ENCODE measurements at regions of chr11 and their contacts with region 1.

Region 1: DNA sequence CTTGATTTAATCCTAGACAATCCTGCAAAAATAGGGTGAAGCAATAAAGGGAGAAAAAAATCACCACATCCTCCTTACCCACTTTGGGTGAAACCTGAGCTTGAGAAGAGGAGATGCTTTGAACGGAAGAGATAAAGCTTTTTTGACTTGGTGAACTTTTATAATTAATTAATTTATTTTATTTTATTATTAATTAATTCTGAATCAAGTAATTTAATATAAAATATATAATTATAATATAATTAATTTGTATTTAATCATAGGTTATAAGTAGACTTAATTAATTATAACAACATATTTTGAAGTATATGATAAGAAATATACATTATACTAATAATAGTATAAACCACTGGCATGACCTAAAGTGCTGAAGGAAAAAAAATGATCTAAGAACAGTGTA is 2164.8 kb downstream of the LRRC4C start:
- DNase-seq: no peak
- ATAC-seq: no peak
- H3K4me3 ChIP-seq: no peak overlapping the region
- H3K27ac ChIP-seq: no peak overlapping the region
- H3K4me1 ChIP-seq: no peaks in the 10 kb centered on the region
- H3K27me3 ChIP-seq: no peaks in the 10 kb centered on the region
- CTCF ChIP-seq: no peak

Region 2: DNA sequence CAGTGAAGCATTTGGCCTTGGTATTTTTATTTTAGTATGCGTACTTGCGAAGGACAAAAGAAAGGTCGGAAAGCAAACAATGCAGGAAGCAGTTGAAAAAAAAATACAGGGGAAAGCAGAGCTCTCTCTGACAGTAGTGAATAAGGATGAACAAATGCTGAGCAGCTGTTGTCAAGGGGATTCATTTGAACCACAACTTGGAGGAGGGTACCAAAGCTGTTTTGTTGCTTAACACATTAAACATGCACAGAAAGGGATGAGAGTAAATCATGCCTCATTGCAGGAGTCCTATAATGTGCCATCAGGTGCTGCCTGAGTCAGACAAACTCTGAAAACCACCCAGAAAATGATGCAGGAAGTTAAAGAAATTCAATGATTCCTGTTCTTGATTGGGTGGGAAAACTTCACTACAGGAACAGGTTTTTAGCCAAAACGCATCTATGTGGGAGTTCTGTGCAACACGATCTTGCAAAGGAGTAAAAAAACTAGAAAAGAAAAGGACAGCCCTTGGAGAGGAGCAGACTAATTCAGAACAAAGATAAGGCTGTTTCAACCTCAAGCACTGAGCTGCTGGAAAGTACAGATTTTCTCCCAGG is 51.3 kb after region 1 on chr11:
- intact Hi-C with region 1: no loop called
- DNase-seq: no peak
- ATAC-seq: no peak
- H3K4me3 ChIP-seq: no peak overlapping the region
- H3K27ac ChIP-seq: no peak overlapping the region
- H3K4me1 ChIP-seq: no peaks in the 10 kb centered on the region
- H3K27me3 ChIP-seq: no peaks in the 10 kb centered on the region
- CTCF ChIP-seq: no peak

Region 3: GRCh38 chr11:39489950-39490349 is 195.3 kb after region 1 on chr11:
- intact Hi-C with region 1: loop called in 1 of 3 experiments (anchors 10 kb)
- DNase-seq: no peak
- ATAC-seq: peak in 2 of 4 donors; percentile 48 to 49
- H3K4me3 ChIP-seq: no peak overlapping the region
- H3K27ac ChIP-seq: no peak overlapping the region
- H3K4me1 ChIP-seq: no peaks in the 10 kb centered on the region
- H3K27me3 ChIP-seq: no peaks in the 10 kb centered on the region
- CTCF ChIP-seq: no peak